H1 (cell line): ENCODE measurements at regions of chr19 and their contacts with region 1.

Region 1: DNA sequence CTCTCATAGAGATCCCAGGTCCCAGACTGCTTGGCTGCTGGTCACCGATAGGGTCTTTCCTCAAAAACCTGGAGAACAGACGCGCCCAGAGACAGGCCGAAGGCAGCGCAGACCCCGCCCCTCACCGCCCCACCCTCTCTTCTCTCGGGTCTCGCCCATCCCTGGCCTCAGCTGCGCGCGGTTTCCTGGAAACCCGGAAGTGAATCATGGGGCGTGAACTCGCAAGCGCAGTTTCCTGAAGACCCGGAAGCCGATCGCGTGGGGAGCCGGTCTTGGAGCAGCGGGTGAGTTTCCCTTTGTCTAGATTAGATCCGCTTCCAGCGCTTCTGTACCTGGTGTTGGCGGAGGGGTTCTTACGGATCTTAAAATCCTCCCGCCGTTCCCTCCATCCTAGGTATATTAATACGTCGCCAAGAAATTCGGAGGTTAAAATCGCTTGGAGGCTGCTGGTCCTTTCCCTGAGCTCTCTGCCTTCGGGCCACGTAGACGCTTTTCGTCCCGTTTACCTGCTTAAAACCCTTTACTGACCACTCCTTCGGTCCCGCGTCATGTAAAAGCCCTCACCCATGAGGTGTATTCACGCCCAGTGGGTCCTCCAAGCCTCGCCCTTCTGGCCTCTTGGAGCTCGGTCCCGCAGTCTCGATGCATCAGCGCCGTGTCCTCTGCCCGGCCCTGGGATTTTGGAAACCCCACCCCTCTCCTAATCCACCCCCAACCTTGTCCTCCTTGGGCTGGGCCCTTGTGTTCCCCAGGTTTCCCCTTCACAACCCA is at the start of gene ZNF578:
- DNase-seq: peak in 1 of 2 experiments; percentile 75
- H3K4me3 ChIP-seq: peak within 1 kb of the TSS; percentile 38 to 85 (median 56); a peak in 7 of 8 replicates
- H3K27ac ChIP-seq: no peak within 1 kb of the TSS
- H3K4me1 ChIP-seq: no peaks in the 10 kb centered on the region
- H3K27me3 ChIP-seq: no peaks in the 10 kb centered on the region
- CTCF ChIP-seq: no peak
- EP300 ChIP-seq: no peak
- POLR2A ChIP-seq: no peak
- RAD21 ChIP-seq: no peak
- total RNA-seq, gene ZNF578: 4.2 TPM in 2 replicates

Region 2: GRCh38 chr19:52277574-52277925 is 176.0 kb before region 1 on chr19:
- CTCF ChIA-PET with region 1: no interaction called
- POLR2A ChIA-PET with region 1: no interaction called
- DNase-seq: no peak
- H3K4me3 ChIP-seq: no peak overlapping the region
- H3K27ac ChIP-seq: no peak overlapping the region
- H3K4me1 ChIP-seq: peaks cover 0 to 3% (median 0%) of the 10 kb centered on the region in 4 experiments; a peak in 2 of 7 replicates
- H3K27me3 ChIP-seq: no peaks in the 10 kb centered on the region
- CTCF ChIP-seq: no peak
- EP300 ChIP-seq: no peak
- POLR2A ChIP-seq: no peak
- RAD21 ChIP-seq: no peak

Region 3: GRCh38 chr19:52307275-52307674 is 146.2 kb before region 1 on chr19:
- CTCF ChIA-PET with region 1: no interaction called
- POLR2A ChIA-PET with region 1: no interaction called
- DNase-seq: peak in 1 of 2 experiments; percentile 53
- H3K4me3 ChIP-seq: no peak overlapping the region
- H3K27ac ChIP-seq: no peak overlapping the region
- H3K4me1 ChIP-seq: no peaks in the 10 kb centered on the region
- H3K27me3 ChIP-seq: no peaks in the 10 kb centered on the region
- CTCF ChIP-seq: no peak
- EP300 ChIP-seq: no peak
- POLR2A ChIP-seq: no peak
- RAD21 ChIP-seq: no peak

Region 4: GRCh38 chr19:52397310-52398080 is 56.0 kb before region 1 on chr19 and contains the start of gene ZNF528:
- CTCF ChIA-PET with region 1: interaction called, 4 read pairs
- POLR2A ChIA-PET with region 1: interaction called, 23 read pairs
- DNase-seq: peak in 1 of 2 experiments; percentile 80
- H3K4me3 ChIP-seq: peak within 1 kb of the TSS; percentile 21 to 71 (median 64)
- H3K27ac ChIP-seq: peak within 1 kb of the TSS; percentile 30; the same call in 1 of the 2 replicates
- H3K4me1 ChIP-seq: no peaks in the 10 kb centered on the region; a peak in 2 of 7 replicates
- H3K27me3 ChIP-seq: no peaks in the 10 kb centered on the region
- CTCF ChIP-seq: no peak
- EP300 ChIP-seq: no peak
- POLR2A ChIP-seq: peak in 1 of 2 experiments; percentile 55; a peak in 2 of 3 replicates
- RAD21 ChIP-seq: no peak
- total RNA-seq, gene ZNF528: 0.10 and 0.58 TPM in 2 replicates

Region 5: DNA sequence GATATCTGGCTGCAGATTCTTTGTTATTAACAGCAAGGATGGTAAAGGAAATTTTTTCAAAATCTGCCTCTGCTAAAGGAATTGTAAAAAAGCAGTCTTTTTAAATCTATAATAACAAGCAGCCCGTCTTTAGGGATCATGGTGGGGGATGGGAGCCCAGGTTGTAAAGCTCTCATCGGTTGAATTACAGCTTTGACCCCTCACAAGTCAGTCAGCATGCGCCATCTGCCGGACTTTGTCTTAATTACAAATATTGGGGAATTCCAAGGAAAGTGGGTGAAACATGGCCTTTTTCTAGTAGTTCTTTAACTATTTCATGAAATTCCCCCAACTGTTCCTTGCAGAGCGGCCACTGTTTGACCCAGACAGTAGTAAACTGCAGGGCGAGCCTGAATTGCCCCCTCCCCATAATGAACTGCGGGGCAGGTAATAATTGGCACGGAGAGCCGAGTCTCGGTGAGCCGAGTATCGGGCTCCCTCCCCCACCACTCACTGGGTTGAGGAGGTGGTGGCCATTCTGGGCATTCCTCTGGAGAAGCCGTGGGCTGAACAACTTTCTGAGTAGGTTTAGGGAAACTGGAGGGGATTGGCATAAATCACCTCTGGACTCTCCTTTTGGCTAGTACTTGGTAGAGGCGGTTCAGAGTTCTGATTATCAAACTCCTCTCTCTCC is 11.4 kb after region 1 on chr19:
- CTCF ChIA-PET with region 1: interaction called, 7 read pairs
- POLR2A ChIA-PET with region 1: interaction called, 13 read pairs
- DNase-seq: peak in 1 of 2 experiments; percentile 59
- H3K4me3 ChIP-seq: no peak overlapping the region
- H3K27ac ChIP-seq: no peak overlapping the region
- H3K4me1 ChIP-seq: peaks cover 0 to 2% (median 0%) of the 10 kb centered on the region in 4 experiments; a peak in 1 of 7 replicates
- H3K27me3 ChIP-seq: no peaks in the 10 kb centered on the region
- CTCF ChIP-seq: peak; percentile 14 to 72 (median 64)
- EP300 ChIP-seq: no peak
- POLR2A ChIP-seq: no peak
- RAD21 ChIP-seq: peak; percentile 80 to 87